ENCODE measurements at regions of chr3 and their contacts with region 1.

Region 1: DNA sequence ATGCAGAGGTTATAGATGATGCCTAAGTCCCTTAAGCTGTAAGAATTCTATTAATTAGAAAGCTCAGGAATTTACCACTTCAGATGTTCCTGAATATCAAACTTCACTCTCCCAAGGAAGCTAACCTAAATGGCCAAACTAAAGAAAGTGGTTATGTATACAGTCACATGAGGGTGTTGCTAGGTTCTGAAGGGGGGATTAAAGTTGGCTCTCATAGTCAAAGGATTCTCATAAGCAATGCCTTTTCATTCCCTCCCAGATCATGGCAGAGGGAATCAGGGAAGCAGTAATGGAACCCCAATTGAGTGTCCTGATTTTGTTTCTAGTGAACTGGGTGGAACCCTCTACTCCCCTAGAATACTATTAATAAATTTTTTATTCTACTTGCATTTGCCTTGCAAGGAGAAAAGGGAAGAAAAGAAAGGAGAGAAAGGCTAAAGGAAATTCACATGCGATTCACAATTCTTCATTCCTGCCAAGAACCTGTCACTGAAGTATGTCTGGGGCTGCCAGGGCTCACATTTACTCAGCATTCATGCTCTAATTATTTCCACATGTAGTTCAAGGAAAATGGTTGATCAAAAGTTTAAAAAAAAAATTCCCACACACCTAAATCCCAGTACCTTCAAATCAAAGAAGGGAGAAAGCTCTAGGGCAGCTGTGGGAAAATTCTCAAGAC is 25.1 kb downstream of the FSTL1 start:
- DNase-seq: peak; percentile 78
- H3K4me3 ChIP-seq: no peak overlapping the region
- H3K27ac ChIP-seq: no peak overlapping the region
- H3K4me1 ChIP-seq: peaks cover 16% of the 10 kb centered on the region
- H3K27me3 ChIP-seq: no peaks in the 10 kb centered on the region
- CTCF ChIP-seq: no peak
- POLR2A ChIP-seq: no peak

Region 2: GRCh38 chr3:120399372-120399771 is 26.3 kb before region 1 on chr3:
- CTCF ChIA-PET with region 1: no interaction called
- POLR2A ChIA-PET with region 1: no interaction called
- dilution Hi-C with region 1: no loop called
- intact Hi-C with region 1: no loop called
- DNase-seq: no peak
- H3K4me3 ChIP-seq: no peak overlapping the region
- H3K27ac ChIP-seq: no peak overlapping the region
- H3K4me1 ChIP-seq: no peaks in the 10 kb centered on the region
- H3K27me3 ChIP-seq: no peaks in the 10 kb centered on the region
- CTCF ChIP-seq: no peak
- POLR2A ChIP-seq: no peak

Region 3: DNA sequence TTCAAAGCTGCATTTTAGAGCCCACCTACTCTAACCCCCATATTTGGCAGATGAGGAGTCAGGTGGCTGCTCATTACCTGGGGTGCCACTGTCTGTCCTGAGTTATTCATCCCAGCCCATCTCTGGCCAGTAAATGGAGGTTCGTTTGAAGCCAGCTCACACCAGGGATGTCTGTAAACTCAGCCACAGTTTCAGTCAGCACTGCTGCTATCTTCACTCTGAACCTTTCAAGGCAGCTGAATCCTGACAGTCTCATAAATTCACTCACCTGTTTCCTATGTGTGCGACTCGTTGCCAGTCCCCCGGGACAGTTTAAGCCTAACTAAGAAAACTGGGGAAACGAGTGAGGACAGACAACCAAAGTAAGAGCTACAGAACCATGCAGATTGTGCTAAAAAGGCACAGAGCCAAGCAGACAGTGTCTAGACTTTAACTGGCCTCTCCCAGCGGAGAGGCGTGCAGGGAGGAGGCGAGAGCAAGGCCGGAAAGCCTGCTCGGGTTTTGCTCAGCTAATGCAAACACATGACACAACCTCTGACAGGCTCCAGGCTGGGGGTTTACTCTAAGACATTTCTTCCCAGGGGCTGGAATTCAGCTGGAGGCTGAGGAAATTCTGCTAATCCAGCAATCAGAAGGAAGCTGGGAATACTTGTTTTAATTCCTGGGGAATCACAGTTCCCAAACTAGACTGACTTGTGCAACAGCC is 13.1 kb after region 1 on chr3:
- CTCF ChIA-PET with region 1: interaction called, 367 read pairs
- POLR2A ChIA-PET with region 1: no interaction called
- dilution Hi-C with region 1: no loop called
- intact Hi-C with region 1: no loop called
- DNase-seq: peak; percentile 95
- H3K4me3 ChIP-seq: no peak overlapping the region
- H3K27ac ChIP-seq: peak overlapping the region; percentile 91
- H3K4me1 ChIP-seq: peaks cover 66% of the 10 kb centered on the region
- H3K27me3 ChIP-seq: no peaks in the 10 kb centered on the region
- CTCF ChIP-seq: no peak
- POLR2A ChIP-seq: no peak

Region 4: GRCh38 chr3:120855665-120856437 is 430.1 kb after region 1 on chr3:
- CTCF ChIA-PET with region 1: no interaction called
- POLR2A ChIA-PET with region 1: no interaction called
- dilution Hi-C with region 1: no loop called
- intact Hi-C with region 1: no loop called
- DNase-seq: no peak
- H3K4me3 ChIP-seq: no peak overlapping the region
- H3K27ac ChIP-seq: no peak overlapping the region
- H3K4me1 ChIP-seq: no peaks in the 10 kb centered on the region
- H3K27me3 ChIP-seq: peaks cover 2 to 6% of the 10 kb centered on the region in 2 experiments
- CTCF ChIP-seq: no peak
- POLR2A ChIP-seq: no peak